ENCODE measurements at regions of chr11 and their contacts with region 1.

Region 1: GRCh38 chr11:65817835-65818742 is 15.7 kb upstream of the SNX32 start:
- DNase-seq: peak; percentile 95 to 98
- ATAC-seq: peak; percentile 96 to 99 (median 98)
- H3K4me3 ChIP-seq: peak overlapping the region; percentile 70
- H3K27ac ChIP-seq: peak overlapping the region; percentile 54
- H3K4me1 ChIP-seq: no peaks in the 10 kb centered on the region
- H3K27me3 ChIP-seq: no peaks in the 10 kb centered on the region
- CTCF ChIP-seq: peak; percentile 100

Region 2: GRCh38 chr11:65625628-65626342 is 192.3 kb before region 1 on chr11:
- intact Hi-C with region 1: loop called in 1 of 2 experiments (anchors 5 kb)
- DNase-seq: peak in 1 of 2 donors; percentile 62
- ATAC-seq: peak; percentile 59 to 80 (median 68)
- H3K4me3 ChIP-seq: no peak overlapping the region
- H3K27ac ChIP-seq: no peak overlapping the region
- H3K4me1 ChIP-seq: no peaks in the 10 kb centered on the region
- H3K27me3 ChIP-seq: no peaks in the 10 kb centered on the region
- CTCF ChIP-seq: peak; percentile 56

Region 3: GRCh38 chr11:65703846-65704245 is 114.2 kb before region 1 on chr11:
- intact Hi-C with region 1: loop called (anchors 2 kb)
- DNase-seq: no peak
- ATAC-seq: no peak
- H3K4me3 ChIP-seq: no peak overlapping the region
- H3K27ac ChIP-seq: no peak overlapping the region
- H3K4me1 ChIP-seq: no peaks in the 10 kb centered on the region
- H3K27me3 ChIP-seq: no peaks in the 10 kb centered on the region
- CTCF ChIP-seq: no peak

Region 4: GRCh38 chr11:65743928-65744698 is 74.0 kb before region 1 on chr11:
- intact Hi-C with region 1: loop called in 1 of 2 experiments (anchors 1 kb)
- DNase-seq: peak in 1 of 2 donors; percentile 21
- ATAC-seq: peak; percentile 64 to 75 (median 69)
- H3K4me3 ChIP-seq: no peak overlapping the region
- H3K27ac ChIP-seq: no peak overlapping the region
- H3K4me1 ChIP-seq: no peaks in the 10 kb centered on the region
- H3K27me3 ChIP-seq: peaks cover 0 to 29% (median 0%) of the 10 kb centered on the region in 3 donors
- CTCF ChIP-seq: peak; percentile 29

Region 5: GRCh38 chr11:65779851-65780577 is 38.1 kb before region 1 on chr11:
- intact Hi-C with region 1: loop called (anchors 2 to 5 kb)
- DNase-seq: peak; percentile 84 to 89
- ATAC-seq: peak; percentile 79 to 87 (median 85)
- H3K4me3 ChIP-seq: peak overlapping the region; percentile 96
- H3K27ac ChIP-seq: peak overlapping the region; percentile 79
- H3K4me1 ChIP-seq: peaks cover 20% of the 10 kb centered on the region
- H3K27me3 ChIP-seq: peaks cover 0 to 6% (median under 1%) of the 10 kb centered on the region in 3 donors
- CTCF ChIP-seq: peak; percentile 85

Measured in psoas muscle (tissue), 8 donors.